Psoas muscle (tissue), 8 donors: ENCODE measurements at regions of chr22 and their contacts with region 1.

Region 1: GRCh38 chr22:20268279-20269012 is at the start of gene RTN4R:
- DNase-seq: peak; percentile 69 to 73
- ATAC-seq: peak; percentile 72 to 88 (median 81)
- H3K4me3 ChIP-seq: peak within 1 kb of the TSS; percentile 55
- H3K27ac ChIP-seq: no peak within 1 kb of the TSS
- H3K4me1 ChIP-seq: no peaks in the 10 kb centered on the region
- H3K27me3 ChIP-seq: no peaks in the 10 kb centered on the region
- CTCF ChIP-seq: peak; percentile 63
- total RNA-seq, gene RTN4R: 0.22 to 2.4 (median 0.64) TPM

Region 2: GRCh38 chr22:20164863-20165262 is 103.6 kb before region 1 on chr22:
- intact Hi-C with region 1: loop called in 1 of 2 experiments (anchors 5 kb)
- DNase-seq: no peak
- ATAC-seq: no peak
- H3K4me3 ChIP-seq: no peak overlapping the region
- H3K27ac ChIP-seq: no peak overlapping the region
- H3K4me1 ChIP-seq: no peaks in the 10 kb centered on the region
- H3K27me3 ChIP-seq: no peaks in the 10 kb centered on the region
- CTCF ChIP-seq: no peak

Region 3: DNA sequence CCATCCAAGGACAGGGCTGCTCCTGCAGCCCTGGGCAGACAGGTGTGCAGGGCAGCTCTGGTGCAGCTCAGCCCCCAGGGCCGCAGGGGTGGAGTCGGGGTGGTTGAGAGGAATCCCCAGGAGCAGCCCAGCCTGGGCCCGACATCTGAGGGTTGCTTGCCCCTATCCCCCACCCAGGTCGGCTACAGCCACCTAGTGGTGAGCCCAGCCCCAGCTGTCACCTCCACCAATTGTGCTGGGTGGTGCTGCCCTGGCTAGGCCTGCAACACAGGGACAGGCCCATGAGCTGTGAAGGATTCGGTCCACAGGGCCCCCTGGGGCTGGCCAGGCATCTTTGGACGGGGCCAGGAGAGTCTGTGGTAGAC is 29.9 kb before region 1 on chr22:
- intact Hi-C with region 1: no loop called
- DNase-seq: peak; percentile 35 to 67
- ATAC-seq: peak; percentile 60 to 72 (median 66)
- H3K4me3 ChIP-seq: peak overlapping the region; percentile 25
- H3K27ac ChIP-seq: peak overlapping the region; percentile 66
- H3K4me1 ChIP-seq: peaks cover 12% of the 10 kb centered on the region
- H3K27me3 ChIP-seq: no peaks in the 10 kb centered on the region
- CTCF ChIP-seq: peak; percentile 45